Mucosa of descending colon (tissue), 3 donors: ENCODE measurements at regions of chr3 and their contacts with region 1.

Region 1: GRCh38 chr3:32467333-32468070 is 35.1 kb downstream of the CMTM6 start:
- DNase-seq: peak; percentile 79 to 88 (median 83)
- ATAC-seq: peak; percentile 94
- H3K4me3 ChIP-seq: no peak overlapping the region
- H3K4me1 ChIP-seq: no peaks in the 10 kb centered on the region
- CTCF ChIP-seq: peak; percentile 97

Region 2: GRCh38 chr3:32296256-32297204 is 171.0 kb before region 1 on chr3:
- intact Hi-C with region 1: loop called in 1 of 2 experiments (anchors 10 kb)
- DNase-seq: peak in 2 of 3 donors; percentile 56 to 62
- ATAC-seq: peak; percentile 94
- H3K4me3 ChIP-seq: no peak overlapping the region
- H3K4me1 ChIP-seq: no peaks in the 10 kb centered on the region
- CTCF ChIP-seq: peak; percentile 55

Region 3: DNA sequence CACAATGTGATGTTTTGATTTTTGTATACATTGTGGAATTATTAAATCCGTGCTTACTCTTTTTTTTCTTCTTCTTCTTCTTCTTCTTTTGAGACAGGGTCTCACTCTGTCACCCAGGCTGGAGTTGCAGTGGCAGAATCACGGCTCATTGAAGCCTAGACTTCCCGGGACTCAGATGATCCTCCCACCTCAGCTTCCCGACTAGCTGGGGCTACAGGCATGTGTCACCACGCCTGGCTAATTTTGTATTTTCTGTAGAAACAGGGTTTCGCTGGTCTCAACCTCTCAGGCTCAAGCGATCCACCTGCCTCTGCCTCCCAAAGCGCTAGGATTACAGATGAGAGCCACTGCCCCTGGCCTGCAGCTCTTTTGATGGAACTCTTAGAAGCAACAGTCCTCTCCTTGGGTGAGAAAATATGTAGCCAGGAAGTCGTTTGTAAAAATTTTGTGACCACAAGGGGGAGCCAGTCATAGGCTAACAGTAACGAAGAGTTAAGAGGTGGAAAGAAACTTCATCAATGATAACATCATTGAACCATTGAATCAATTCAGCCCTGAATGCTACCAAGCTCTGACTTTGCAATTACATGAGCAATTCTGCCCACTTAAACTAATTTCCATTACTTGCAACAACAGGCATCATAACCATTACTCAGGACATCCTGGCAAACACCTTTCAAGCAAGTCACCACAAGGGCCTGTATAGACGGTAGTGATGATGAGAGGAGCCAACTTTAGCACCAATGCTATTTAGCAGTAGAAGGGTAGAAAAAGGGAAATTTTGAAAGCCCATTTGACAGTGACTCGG is 92.5 kb before region 1 on chr3:
- intact Hi-C with region 1: loop called (anchors 5 to 10 kb)
- DNase-seq: peak in 1 of 3 donors; percentile 94
- ATAC-seq: peak; percentile 76
- H3K4me3 ChIP-seq: no peak overlapping the region
- H3K4me1 ChIP-seq: no peaks in the 10 kb centered on the region
- CTCF ChIP-seq: peak; percentile 18